ENCODE measurements at regions of chr1 and their contacts with region 1.

Region 1: GRCh38 chr1:155012026-155012546 is 9.5 kb downstream of the ZBTB7B start:
- DNase-seq: peak; percentile 80 to 88
- H3K4me3 ChIP-seq: peak overlapping the region in 1 of 4 experiments; percentile 38; a peak in 1 of 8 replicates
- H3K27ac ChIP-seq: no peak overlapping the region
- H3K4me1 ChIP-seq: peaks cover 8 to 48% (median 39%) of the 10 kb centered on the region in 4 experiments
- H3K27me3 ChIP-seq: no peaks in the 10 kb centered on the region
- CTCF ChIP-seq: no peak; a peak in 1 of 4 replicates
- EP300 ChIP-seq: no peak
- POLR2A ChIP-seq: no peak; a peak in 1 of 3 replicates
- RAD21 ChIP-seq: no peak

Region 2: GRCh38 chr1:154982897-154983648 is 29.0 kb before region 1 on chr1 and contains the start of gene FLAD1:
- CTCF ChIA-PET with region 1: interaction called, 8 read pairs
- POLR2A ChIA-PET with region 1: interaction called, 17 read pairs
- DNase-seq: peak; percentile 93 to 98
- H3K4me3 ChIP-seq: peak within 1 kb of the TSS; percentile 87 to 99 (median 96)
- H3K27ac ChIP-seq: peak within 1 kb of the TSS; percentile 88
- H3K4me1 ChIP-seq: peaks cover 0 to 6% (median 2%) of the 10 kb centered on the region in 4 experiments; a peak in 3 of 7 replicates
- H3K27me3 ChIP-seq: no peaks in the 10 kb centered on the region
- CTCF ChIP-seq: no peak
- EP300 ChIP-seq: no peak
- POLR2A ChIP-seq: peak; percentile 74 to 78; a peak in 2 of 3 replicates
- RAD21 ChIP-seq: no peak
- total RNA-seq, gene FLAD1: 97.4 and 104 TPM in 2 replicates

Region 3: GRCh38 chr1:154992721-154993571 is 19.1 kb before region 1 on chr1:
- CTCF ChIA-PET with region 1: interaction called, 258 read pairs
- POLR2A ChIA-PET with region 1: interaction called, 29 read pairs
- DNase-seq: peak in 1 of 2 experiments; percentile 58
- H3K4me3 ChIP-seq: no peak overlapping the region
- H3K27ac ChIP-seq: peak overlapping the region; percentile 58; the same call in 1 of the 2 replicates
- H3K4me1 ChIP-seq: peaks cover 0 to 7% (median 3%) of the 10 kb centered on the region in 4 experiments; a peak in 3 of 7 replicates
- H3K27me3 ChIP-seq: no peaks in the 10 kb centered on the region
- CTCF ChIP-seq: peak; percentile 45 to 51 (median 48)
- EP300 ChIP-seq: no peak
- POLR2A ChIP-seq: peak; percentile 51 to 61
- RAD21 ChIP-seq: peak; percentile 12 to 33; a peak in 2 of 4 replicates

Measured in H1 (cell line).